ENCODE measurements at regions of chr3 and their contacts with region 1.

Region 1: GRCh38 chr3:157130467-157131251 is 29.3 kb downstream of the CCNL1 start:
- DNase-seq: peak; percentile 39
- CTCF ChIP-seq: peak; percentile 67

Region 2: GRCh38 chr3:156655819-156656550 is 474.7 kb before region 1 on chr3:
- in situ Hi-C with region 1: no loop called
- DNase-seq: peak; percentile 34
- CTCF ChIP-seq: no peak

Region 3: DNA sequence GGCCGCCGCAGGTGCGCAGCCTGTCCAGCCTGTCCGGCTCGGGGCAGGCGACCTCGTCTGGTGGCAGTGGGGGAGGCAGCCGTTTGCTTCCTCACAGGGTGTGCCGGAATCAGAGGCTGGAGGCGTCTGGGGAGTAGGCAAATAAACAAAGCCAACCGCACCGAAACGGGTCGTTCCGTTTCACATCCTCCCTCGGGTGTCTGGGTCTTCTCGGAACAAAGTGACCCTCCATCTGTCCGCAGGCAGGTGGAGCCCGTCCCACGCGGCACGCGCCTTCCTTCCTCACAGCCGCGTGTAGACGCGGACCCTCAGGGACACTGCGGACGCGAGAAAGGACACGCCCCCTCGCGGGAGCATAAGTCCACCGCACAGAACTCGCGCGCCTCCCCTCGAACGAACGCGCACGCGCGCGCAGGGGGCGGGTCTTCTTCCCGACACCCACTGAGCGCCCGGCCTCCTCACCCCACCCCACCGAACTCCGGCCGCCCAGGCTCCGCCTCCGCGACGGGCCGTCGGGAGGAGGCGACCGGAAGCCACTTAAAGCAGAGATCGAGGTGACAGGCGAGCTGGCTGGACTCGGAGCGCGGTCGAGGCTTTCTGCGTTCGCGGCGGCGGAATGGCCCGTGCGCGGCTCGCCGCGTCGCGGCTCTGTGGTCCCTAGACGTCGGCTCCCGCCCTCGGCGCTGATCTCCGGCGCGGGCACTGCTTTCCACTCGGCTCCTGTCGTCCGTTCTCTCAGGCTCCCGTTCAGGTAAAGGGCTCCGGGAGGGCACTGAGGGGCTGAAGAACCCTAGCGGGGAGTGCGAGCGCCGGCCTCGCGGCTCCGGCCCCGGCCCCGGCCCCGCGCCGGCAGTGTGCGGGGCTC is 456.4 kb before region 1 on chr3 and contains the start of gene TIPARP:
- in situ Hi-C with region 1: loop called (anchors 10 kb)
- DNase-seq: peak; percentile 98
- CTCF ChIP-seq: peak; percentile 86

Region 4: DNA sequence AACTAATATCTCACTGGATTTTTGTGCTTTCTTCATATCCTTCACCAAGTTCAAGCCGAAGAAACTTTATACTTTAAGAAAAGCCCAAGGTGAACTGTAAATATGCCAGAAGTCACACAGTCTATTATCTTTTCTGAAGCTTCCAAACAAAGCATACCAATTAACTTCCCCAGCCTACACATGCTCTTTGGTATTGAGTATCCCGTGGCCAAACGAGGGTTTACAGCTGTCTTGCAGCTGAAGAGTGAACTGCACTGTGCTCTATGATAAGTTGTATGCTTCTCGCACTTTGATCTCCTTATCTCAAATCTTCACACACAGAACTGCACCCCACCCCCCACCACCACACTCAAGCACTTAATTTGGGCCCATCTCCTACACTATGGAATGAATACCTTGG is 588.1 kb after region 1 on chr3:
- in situ Hi-C with region 1: no loop called
- DNase-seq: no peak
- CTCF ChIP-seq: no peak